ENCODE measurements at regions of chr6 and their contacts with region 1.

Region 1: DNA sequence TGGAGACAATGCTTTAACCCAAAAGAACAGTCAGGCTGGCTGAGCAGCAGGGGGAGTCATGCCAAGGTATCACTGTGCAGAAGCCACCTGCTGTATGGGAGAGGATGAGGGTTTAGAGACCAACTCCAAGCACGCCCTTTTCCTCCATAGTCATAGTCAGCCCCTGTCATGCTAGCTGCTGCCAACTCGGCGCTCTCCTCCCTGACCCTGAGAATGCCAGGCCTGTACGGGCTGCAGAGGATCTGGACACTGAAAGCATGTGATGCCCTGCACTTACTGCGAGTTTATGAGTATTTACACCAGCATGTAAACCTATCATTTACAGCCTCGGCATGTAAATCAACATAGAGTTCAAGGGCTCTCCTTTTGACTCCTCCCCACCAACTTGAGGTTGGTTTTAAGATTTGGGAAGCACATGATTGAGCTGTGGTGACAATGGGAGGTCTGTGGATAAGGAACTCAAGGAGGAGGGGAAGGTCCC is 11.7 kb upstream of the SCUBE3 start:
- DNase-seq: no peak
- H3K4me3 ChIP-seq: no peak overlapping the region
- H3K27ac ChIP-seq: peak overlapping the region in 1 of 4 donors; percentile 38
- H3K4me1 ChIP-seq: peaks cover 0 to 9% (median 6%) of the 10 kb centered on the region in 4 donors
- H3K27me3 ChIP-seq: peaks cover 0 to 6% (median 0%) of the 10 kb centered on the region in 3 donors
- CTCF ChIP-seq: no peak
- EP300 ChIP-seq: no peak
- POLR2A ChIP-seq: no peak

Region 2: GRCh38 chr6:34986845-34987246 is 215.3 kb before region 1 on chr6:
- intact Hi-C with region 1: loop called (anchors 10 kb)
- DNase-seq: peak; percentile 83
- H3K4me3 ChIP-seq: no peak overlapping the region
- H3K27ac ChIP-seq: peak overlapping the region in 3 of 4 donors; percentile 7 to 36 (median 16)
- H3K4me1 ChIP-seq: peaks cover 0 to 28% (median 16%) of the 10 kb centered on the region in 4 donors
- H3K27me3 ChIP-seq: no peaks in the 10 kb centered on the region
- CTCF ChIP-seq: peak; percentile 78 to 88 (median 84)
- EP300 ChIP-seq: no peak
- POLR2A ChIP-seq: no peak

Region 3: DNA sequence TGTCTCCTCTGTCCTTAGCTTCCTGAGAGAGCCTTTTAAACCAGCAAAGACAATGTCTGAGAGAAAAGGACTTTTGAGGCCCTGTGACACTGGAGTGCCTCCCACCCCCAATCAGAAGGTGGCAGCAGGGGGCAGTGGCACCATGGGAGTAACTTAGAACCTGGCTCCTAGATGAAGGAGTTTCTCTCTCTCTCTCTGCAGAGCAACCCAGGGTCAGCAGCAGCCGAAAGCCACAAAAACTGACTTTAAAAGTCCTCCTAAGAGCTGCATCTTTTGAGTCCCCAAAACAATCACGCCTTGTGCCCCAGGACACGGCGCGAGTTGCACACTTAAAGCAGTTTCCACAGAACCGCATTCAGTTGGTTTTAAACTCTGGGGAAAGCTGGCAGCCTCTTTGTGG is 55.7 kb before region 1 on chr6:
- intact Hi-C with region 1: loop called (anchors 2 kb)
- DNase-seq: no peak
- H3K4me3 ChIP-seq: no peak overlapping the region
- H3K27ac ChIP-seq: no peak overlapping the region
- H3K4me1 ChIP-seq: peaks cover 0 to 17% (median 6%) of the 10 kb centered on the region in 4 donors
- H3K27me3 ChIP-seq: no peaks in the 10 kb centered on the region
- CTCF ChIP-seq: peak in 3 of 4 experiments; percentile 34 to 60 (median 57)
- EP300 ChIP-seq: no peak
- POLR2A ChIP-seq: no peak